ENCODE measurements at regions of chr22 and their contacts with region 1.

Region 1: DNA sequence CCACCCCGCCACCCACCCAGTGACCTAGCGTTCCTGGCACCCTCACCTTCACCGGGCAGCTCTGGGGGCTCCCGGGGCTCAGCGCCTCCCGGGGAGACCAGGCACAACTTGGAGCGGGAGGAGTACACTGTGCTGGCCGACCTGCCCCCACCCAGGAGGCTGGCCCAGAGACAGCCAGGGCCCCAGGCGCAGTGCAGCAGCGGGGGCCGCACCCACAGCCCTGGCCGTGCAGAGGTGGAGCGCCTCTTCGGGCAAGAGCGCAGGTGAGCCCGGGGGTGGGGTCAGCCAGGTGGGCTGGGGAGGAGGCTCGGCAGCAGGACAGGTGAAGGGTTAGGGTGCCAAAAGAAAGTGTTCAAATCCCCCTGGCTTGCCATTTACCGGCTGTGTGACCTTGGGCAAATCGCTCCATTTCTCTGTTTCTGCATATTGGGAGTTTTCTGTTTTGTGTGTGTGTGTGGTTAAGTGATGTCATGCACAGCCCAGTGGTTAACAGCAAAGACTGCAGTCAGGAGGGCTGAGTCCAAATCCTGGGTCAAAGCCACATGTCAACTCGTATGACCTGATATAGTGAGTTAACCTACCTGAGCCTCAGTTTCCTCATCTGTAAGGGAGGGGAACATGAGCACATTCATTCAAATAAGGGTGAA is 29.5 kb downstream of the TRIOBP start:
- DNase-seq: no peak
- ATAC-seq: peak; percentile 25 to 55 (median 46)
- H3K4me3 ChIP-seq: no peak overlapping the region
- H3K27ac ChIP-seq: no peak overlapping the region
- H3K4me1 ChIP-seq: peaks cover 0 to 30% (median 8%) of the 10 kb centered on the region in 4 donors
- H3K27me3 ChIP-seq: no peaks in the 10 kb centered on the region
- CTCF ChIP-seq: peak; percentile 24 to 35 (median 27)
- POLR2A ChIP-seq: no peak

Region 2: GRCh38 chr22:37616201-37617083 is 109.9 kb before region 1 on chr22:
- intact Hi-C with region 1: no loop called
- DNase-seq: no peak
- ATAC-seq: no peak
- H3K4me3 ChIP-seq: no peak overlapping the region
- H3K27ac ChIP-seq: no peak overlapping the region
- H3K4me1 ChIP-seq: peaks cover 0 to 2% (median 0%) of the 10 kb centered on the region in 4 donors
- H3K27me3 ChIP-seq: no peaks in the 10 kb centered on the region
- CTCF ChIP-seq: no peak
- POLR2A ChIP-seq: no peak

Region 3: DNA sequence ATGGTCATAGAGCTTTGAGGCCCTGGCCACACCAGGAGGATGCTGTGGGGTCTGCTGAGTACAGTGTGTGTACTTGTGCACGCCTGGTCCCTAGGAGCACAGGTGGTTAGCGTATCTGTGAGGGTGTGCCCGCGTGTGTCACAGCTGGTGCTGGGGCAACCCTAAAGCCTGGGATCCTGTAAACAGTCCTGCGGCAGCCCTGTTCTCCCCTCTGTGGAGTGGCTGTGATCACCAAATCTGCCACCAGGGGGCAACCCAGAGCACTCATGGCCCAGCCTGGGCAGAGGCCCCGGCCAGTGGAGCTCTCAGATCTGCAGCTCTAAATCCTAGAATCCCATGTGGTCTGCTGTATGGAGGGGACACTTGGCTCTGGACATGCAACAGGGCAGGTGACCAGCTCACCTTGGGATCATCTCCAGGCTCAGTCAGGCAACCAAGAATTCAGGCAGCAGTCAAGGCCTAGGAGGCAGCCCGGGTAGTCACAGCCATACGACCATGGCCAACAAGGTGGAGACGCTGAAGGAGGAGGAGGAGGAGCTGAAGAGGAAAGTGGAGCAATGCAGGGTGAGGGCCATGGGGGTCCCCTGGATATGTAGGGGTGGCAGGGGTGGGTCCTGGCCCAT is 83.0 kb before region 1 on chr22:
- intact Hi-C with region 1: loop called (anchors 10 kb)
- DNase-seq: peak; percentile 82 to 88 (median 85)
- ATAC-seq: peak; percentile 81 to 87 (median 85)
- H3K4me3 ChIP-seq: no peak overlapping the region
- H3K27ac ChIP-seq: no peak overlapping the region
- H3K4me1 ChIP-seq: peaks cover 0 to 10% (median 0%) of the 10 kb centered on the region in 4 donors
- H3K27me3 ChIP-seq: no peaks in the 10 kb centered on the region
- CTCF ChIP-seq: peak; percentile 89 to 95 (median 93)
- POLR2A ChIP-seq: no peak

Region 4: DNA sequence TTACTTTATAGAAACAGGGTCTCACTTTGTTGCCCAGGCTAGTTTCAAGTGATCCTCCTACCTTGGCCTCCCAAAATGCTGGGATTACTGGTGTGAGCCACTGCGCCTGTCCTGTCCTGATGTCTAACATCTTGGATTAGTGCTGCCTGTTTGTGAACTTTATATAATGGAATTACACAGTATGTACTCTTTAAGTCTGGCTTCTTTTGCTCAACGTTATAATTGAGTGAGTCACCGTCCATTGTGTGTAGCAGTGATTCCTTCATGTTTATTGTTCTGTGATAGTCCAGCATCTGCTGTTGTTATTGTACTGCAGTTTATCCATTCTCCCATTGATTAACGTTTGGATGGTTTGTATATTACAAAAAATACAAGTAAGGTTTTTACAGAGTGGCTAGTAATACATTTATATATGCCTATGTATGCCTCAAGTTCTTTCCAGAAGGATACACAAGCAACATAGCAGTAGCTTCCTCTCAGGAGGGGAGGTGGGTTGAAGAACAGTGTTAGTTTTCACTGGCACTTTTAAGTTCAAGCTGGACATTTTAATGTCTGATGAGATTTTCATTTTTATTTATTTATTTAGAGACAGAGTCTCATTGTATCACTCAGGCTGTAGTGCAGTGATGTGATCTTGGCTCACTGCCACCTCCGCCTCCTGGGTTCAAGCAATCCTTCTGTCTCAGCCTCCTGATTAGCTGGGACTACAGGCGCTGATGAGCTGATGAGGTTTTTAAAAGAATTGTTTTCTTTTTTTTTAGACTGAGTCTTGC is 154.5 kb after region 1 on chr22:
- intact Hi-C with region 1: no loop called
- DNase-seq: no peak
- ATAC-seq: no peak
- H3K4me3 ChIP-seq: no peak overlapping the region
- H3K27ac ChIP-seq: no peak overlapping the region
- H3K4me1 ChIP-seq: no peaks in the 10 kb centered on the region
- H3K27me3 ChIP-seq: no peaks in the 10 kb centered on the region
- CTCF ChIP-seq: no peak
- POLR2A ChIP-seq: no peak

Measured in right lobe of liver (tissue), 6 donors.